Activated naive CD4-positive, alpha-beta T cell treated with anti-CD3 and anti-CD28 coated beads for 36 hours (primary cell): ENCODE measurements at regions of chr11 and their contacts with region 1.

Region 1: GRCh38 chr11:82718307-82718706 is 15.4 kb downstream of the FAM181B start:
- DNase-seq: peak; percentile 44
- H3K4me3 Mint-ChIP-seq: no peak overlapping the region
- H3K27ac Mint-ChIP-seq: no peak overlapping the region
- H3K4me1 Mint-ChIP-seq: peaks cover 4% of the 10 kb centered on the region
- H3K27me3 Mint-ChIP-seq: no peaks in the 10 kb centered on the region

Region 2: DNA sequence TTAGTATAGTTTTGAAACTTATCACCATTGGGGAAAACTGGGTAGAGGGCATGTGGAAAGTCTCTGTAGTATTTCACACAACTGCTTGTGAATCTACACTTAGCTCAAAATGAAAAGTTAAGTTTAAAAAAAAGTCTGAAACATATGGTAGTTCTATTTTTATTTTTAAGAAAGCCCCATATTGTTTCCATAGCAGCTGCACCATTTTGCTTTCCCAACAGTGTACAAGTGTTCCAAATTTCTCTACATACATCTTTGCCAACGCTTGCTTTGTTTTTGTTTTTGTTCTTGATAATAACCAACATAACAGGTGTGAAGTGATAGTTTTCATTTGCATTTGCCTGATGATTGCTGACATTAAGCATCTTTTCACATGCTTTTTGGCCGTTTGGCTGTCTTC is 429.8 kb before region 1 on chr11:
- CTCF ChIA-PET with region 1: no interaction called
- intact Hi-C with region 1: no loop called
- DNase-seq: no peak
- H3K4me3 Mint-ChIP-seq: no peak overlapping the region
- H3K27ac Mint-ChIP-seq: no peak overlapping the region
- H3K4me1 Mint-ChIP-seq: no peaks in the 10 kb centered on the region
- H3K27me3 Mint-ChIP-seq: no peaks in the 10 kb centered on the region

Region 3: DNA sequence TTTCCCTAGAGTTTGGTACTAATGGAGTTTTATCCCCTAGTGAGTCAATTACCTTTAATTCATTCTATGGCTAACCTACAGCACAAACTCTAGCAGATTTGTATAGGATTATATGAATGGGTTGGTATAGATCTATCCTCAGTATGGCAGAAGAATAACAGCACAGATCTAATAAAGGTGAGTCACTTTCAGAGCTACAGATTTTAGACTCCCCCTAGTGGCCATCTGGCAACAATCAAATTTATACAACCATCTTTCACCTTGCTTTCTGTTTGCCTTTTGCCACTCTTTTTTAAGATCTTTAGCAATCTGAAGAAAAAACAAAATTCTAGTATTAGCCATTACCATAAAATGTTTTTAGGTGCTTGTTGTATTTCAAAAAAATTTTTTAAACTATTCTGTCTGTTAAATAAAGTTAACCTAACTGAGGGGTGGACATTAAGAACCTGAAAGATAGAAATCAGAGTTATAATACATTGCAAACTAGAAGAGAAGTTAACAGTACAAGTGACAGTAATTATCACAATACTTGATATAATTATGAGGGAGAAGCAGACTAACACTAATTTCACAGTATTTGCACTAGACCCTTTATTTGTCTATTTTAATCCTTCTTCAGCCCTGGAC is 209.1 kb after region 1 on chr11:
- CTCF ChIA-PET with region 1: no interaction called
- intact Hi-C with region 1: loop called (anchors 1 kb)
- DNase-seq: peak; percentile 33
- H3K4me3 Mint-ChIP-seq: no peak overlapping the region
- H3K27ac Mint-ChIP-seq: no peak overlapping the region
- H3K4me1 Mint-ChIP-seq: peaks cover 33% of the 10 kb centered on the region
- H3K27me3 Mint-ChIP-seq: no peaks in the 10 kb centered on the region